MCF 10A (cell line): ENCODE measurements at regions of chr6 and their contacts with region 1.

Region 1: DNA sequence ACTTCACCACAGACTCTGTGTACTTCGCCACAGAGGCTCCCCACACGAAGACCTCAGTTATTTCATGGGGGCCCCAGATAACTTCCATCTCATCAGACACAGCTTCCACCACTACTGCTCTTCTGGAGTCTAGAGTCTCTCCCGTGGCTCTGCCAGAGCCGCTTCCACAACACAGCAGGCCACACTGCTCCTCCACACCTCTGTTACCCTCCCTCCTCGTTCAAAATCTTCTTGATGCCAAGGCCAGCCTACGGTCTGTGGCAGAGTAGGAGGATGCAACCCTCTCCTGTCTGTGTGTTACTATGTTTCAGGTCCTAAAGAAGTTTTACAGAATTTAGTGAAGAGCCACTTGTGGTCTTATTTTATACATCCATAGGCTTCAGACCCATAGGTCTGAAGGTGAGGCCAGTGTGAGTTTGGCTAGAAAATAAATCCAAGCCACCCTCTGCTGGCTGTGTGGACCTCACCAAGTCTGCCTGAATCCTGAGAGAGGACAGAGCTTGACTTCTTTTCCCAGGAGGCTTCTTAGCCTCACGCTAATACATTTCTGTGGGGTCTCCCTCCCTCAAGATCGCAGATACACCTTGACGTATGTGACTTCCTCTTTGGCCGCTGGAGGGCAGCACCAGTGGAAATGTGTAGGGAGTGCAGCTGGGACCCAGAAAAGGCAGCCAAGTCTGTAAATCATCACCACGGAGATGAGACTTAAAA is 197.7 kb downstream of the FAXC start:
- DNase-seq: peak; percentile 69
- H3K4me3 Mint-ChIP-seq: no peak overlapping the region
- H3K27ac Mint-ChIP-seq: no peak overlapping the region
- H3K4me1 Mint-ChIP-seq: no peaks in the 10 kb centered on the region
- H3K27me3 Mint-ChIP-seq: peaks cover 48% of the 10 kb centered on the region
- CTCF ChIP-seq: peak; percentile 53

Region 2: GRCh38 chr6:99080191-99080590 is 71.6 kb before region 1 on chr6:
- CTCF ChIA-PET with region 1: no interaction called
- POLR2A ChIA-PET with region 1: no interaction called
- intact Hi-C with region 1: no loop called
- DNase-seq: no peak
- H3K4me3 Mint-ChIP-seq: no peak overlapping the region
- H3K27ac Mint-ChIP-seq: no peak overlapping the region
- H3K4me1 Mint-ChIP-seq: no peaks in the 10 kb centered on the region
- H3K27me3 Mint-ChIP-seq: peaks cover 51% of the 10 kb centered on the region
- CTCF ChIP-seq: no peak

Region 3: GRCh38 chr6:99138445-99138844 is 13.3 kb before region 1 on chr6:
- CTCF ChIA-PET with region 1: interaction called, 11 read pairs
- POLR2A ChIA-PET with region 1: no interaction called
- intact Hi-C with region 1: no loop called
- DNase-seq: no peak
- H3K4me3 Mint-ChIP-seq: no peak overlapping the region
- H3K27ac Mint-ChIP-seq: no peak overlapping the region
- H3K4me1 Mint-ChIP-seq: no peaks in the 10 kb centered on the region
- H3K27me3 Mint-ChIP-seq: peaks cover 37% of the 10 kb centered on the region
- CTCF ChIP-seq: no peak

Region 4: GRCh38 chr6:99236010-99236409 is 84.2 kb after region 1 on chr6:
- CTCF ChIA-PET with region 1: interaction called, 72 read pairs
- POLR2A ChIA-PET with region 1: no interaction called
- intact Hi-C with region 1: no loop called
- DNase-seq: no peak
- H3K4me3 Mint-ChIP-seq: no peak overlapping the region
- H3K27ac Mint-ChIP-seq: no peak overlapping the region
- H3K4me1 Mint-ChIP-seq: no peaks in the 10 kb centered on the region
- H3K27me3 Mint-ChIP-seq: peaks cover 79% of the 10 kb centered on the region
- CTCF ChIP-seq: no peak

Region 5: GRCh38 chr6:99241905-99242534 is 90.2 kb after region 1 on chr6:
- CTCF ChIA-PET with region 1: interaction called, 72 read pairs
- POLR2A ChIA-PET with region 1: interaction called, 3 read pairs
- intact Hi-C with region 1: loop called (anchors 1 kb)
- DNase-seq: peak; percentile 42
- H3K4me3 Mint-ChIP-seq: no peak overlapping the region
- H3K27ac Mint-ChIP-seq: no peak overlapping the region
- H3K4me1 Mint-ChIP-seq: no peaks in the 10 kb centered on the region
- H3K27me3 Mint-ChIP-seq: peaks cover 66% of the 10 kb centered on the region
- CTCF ChIP-seq: peak; percentile 57

Region 6: GRCh38 chr6:99603421-99604165 is 451.8 kb after region 1 on chr6:
- CTCF ChIA-PET with region 1: no interaction called
- POLR2A ChIA-PET with region 1: no interaction called
- intact Hi-C with region 1: no loop called
- DNase-seq: no peak
- H3K4me3 Mint-ChIP-seq: no peak overlapping the region
- H3K27ac Mint-ChIP-seq: no peak overlapping the region
- H3K4me1 Mint-ChIP-seq: no peaks in the 10 kb centered on the region
- H3K27me3 Mint-ChIP-seq: peaks cover 77% of the 10 kb centered on the region
- CTCF ChIP-seq: no peak